Activated CD8-positive, alpha-beta T cell treated with anti-CD3 and anti-CD28 coated beads, Interleukin-2, amount 10 ng/mL, durations not matched to agents 7 days and 5 days (primary cell): ENCODE measurements at regions of chr4 and their contacts with region 1.

Region 1: GRCh38 chr4:39044364-39044955 is 12.3 kb upstream of the TMEM156 start:
- DNase-seq: peak; percentile 91
- ATAC-seq: peak; percentile 81
- H3K4me3 Mint-ChIP-seq: peak overlapping the region; percentile 75
- H3K27ac Mint-ChIP-seq: peak overlapping the region; percentile 79
- H3K4me1 Mint-ChIP-seq: peaks cover 46% of the 10 kb centered on the region
- H3K27me3 Mint-ChIP-seq: no peaks in the 10 kb centered on the region

Region 2: DNA sequence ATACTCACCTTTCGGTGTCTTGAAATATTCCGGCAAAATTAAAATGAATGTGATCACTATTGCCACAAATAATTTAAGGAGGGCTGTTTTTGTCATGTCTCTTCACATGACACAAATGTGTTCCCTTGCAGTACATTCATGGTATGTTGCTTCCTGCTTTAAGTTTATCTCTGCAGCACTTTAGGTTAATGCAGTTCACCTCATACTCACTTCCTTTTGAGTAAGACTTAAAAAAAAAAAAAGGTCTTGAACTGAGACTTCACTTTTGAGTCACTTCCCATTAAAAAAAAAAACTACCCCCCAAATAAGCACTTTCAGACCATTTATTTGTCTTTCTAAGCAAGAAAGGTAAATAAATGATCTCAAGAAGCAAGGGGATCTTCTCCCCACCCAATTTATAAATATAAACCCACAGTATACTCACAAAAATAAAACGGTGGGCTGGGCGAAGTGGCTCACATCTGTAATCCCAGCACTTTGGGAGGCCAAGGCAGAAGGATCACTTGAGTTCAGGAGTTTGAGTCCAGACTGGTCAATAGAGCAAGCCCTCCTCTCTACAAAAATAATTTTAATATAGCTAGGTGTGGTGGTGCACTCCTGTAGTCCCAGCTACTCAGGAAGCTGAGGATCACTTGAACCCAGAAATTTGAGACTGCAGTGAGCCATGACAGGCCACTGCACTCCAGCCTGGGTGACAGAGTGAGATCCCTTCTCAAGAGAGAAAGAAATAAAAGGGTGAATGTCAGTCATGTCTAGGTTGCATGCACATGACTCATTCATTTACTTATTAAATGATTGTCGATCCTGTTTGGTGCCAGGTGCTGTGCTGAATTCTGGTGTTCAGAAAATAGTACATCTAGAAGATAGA is 12.0 kb before region 1 on chr4 and contains the start of gene TMEM156:
- CTCF ChIA-PET with region 1: interaction called, 30 read pairs
- POLR2A ChIA-PET with region 1: interaction called, 56 read pairs
- DNase-seq: peak; percentile 44
- ATAC-seq: peak; percentile 88
- H3K4me3 Mint-ChIP-seq: peak within 1 kb of the TSS; percentile 83
- H3K27ac Mint-ChIP-seq: peak within 1 kb of the TSS; percentile 88
- H3K4me1 Mint-ChIP-seq: peaks cover 40% of the 10 kb centered on the region
- H3K27me3 Mint-ChIP-seq: no peaks in the 10 kb centered on the region
- total RNA-seq, gene TMEM156: 12.4 to 14.1 TPM